Cardiac septum (tissue), 1 donor: ENCODE measurements at regions of chr2 and their contacts with region 1.

Region 1: DNA sequence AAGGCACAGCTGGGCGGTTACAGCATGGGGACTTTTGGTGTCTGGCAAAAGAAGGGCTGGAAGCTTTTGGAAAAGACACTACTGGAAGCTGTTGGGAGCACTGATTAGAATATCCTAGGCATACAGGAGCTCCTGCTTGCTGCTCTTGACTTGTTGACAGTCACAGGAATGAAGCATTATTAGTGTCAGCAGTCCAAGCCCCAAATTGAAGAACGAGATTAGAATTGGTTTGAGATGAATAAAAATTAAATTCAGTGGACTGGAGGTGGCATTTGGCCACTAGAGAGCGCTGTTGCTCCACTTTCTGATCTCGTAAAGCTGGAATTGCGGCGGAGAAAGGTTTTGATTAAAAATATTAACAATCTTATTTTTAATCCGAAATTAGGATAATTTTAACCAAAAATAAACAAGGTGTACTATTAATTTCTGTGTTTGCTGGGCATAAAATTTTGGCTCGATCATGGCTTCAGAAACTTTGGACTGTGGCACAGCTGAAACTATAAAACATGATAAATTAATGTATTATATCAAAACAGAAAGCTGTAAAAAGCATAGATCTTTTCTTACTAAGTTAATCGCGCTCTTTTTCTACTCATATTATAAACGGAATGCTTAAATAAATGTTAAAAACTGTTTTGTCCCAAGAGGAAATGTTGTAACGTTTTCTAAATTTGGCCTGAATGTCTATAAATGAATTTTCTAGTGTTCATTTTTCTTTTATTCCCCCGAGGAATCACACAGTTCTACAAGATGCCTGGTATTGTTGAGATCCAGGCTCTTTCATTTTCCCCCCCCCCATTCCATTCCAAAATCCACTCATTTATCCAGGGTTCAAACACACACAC is 2.4 kb upstream of the HOXD8 start:
- DNase-seq: no peak

Region 2: GRCh38 chr2:176653479-176654443 is 526.6 kb after region 1 on chr2:
- intact Hi-C with region 1: loop called (anchors 5 kb)
- DNase-seq: no peak

Region 3: GRCh38 chr2:177148477-177149154 is 1021.5 kb after region 1 on chr2:
- intact Hi-C with region 1: loop called (anchors 5 kb)
- DNase-seq: peak; percentile 84